ENCODE measurements at regions of chr13 and their contacts with region 1.

Region 1: GRCh38 chr13:111474136-111475002 is 153.9 kb downstream of the TEX29 start:
- DNase-seq: no peak
- ATAC-seq: peak; percentile 47

Region 2: DNA sequence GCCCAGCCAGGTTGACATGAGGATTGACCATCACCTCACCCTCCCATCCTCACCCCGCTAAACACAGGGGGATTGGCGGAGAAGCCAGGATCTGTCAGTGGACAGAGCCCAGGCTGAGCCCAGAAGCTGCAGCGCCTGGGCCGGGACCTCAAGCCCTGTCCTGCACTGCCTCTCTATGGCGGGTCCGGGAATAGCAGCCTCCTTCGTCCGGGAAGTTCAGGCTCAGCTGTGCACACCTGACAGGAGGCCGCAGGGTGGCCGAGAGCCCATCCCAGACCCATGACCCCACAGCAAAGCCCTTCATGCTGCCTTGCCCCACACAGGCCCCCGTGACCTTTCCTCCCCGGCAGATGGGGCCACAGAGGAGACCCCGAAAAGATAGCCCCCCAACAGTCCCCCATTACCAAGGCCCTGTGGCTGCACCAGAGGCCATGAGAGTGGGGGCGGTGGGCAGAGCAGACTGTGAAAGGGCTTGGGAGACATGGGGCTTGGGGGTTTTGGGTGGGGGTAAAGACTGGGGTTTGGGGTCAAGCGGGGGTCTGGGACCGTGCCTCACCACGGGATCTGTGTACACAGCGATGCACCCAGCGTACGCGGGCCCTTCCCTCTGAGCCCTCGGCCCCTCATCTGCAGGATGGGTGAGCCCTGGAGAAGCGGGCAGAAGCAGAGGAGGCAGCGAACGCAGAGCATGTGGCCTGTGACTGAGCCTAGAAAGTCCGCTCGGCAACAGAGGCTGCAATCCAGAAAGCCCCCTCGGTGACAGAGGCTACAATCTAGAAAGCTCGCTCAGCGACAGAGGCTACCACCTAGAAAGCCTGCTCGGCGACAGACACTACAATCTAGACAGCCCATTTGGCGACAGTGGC is 969.9 kb after region 1 on chr13:
- intact Hi-C with region 1: loop called (anchors 10 kb)
- DNase-seq: peak; percentile 72
- ATAC-seq: peak; percentile 89

Measured in left ventricle myocardium superior (tissue), 1 donor.